ENCODE measurements at regions of chr2 and their contacts with region 1.

Region 1: GRCh38 chr2:97806738-97807618 is 93.6 kb downstream of the ZAP70 start:
- DNase-seq: peak; percentile 85
- ATAC-seq: peak; percentile 95 to 97

Region 2: GRCh38 chr2:98164281-98164680 is 357.3 kb after region 1 on chr2:
- intact Hi-C with region 1: no loop called
- DNase-seq: no peak
- ATAC-seq: no peak

Region 3: GRCh38 chr2:98175811-98176210 is 368.8 kb after region 1 on chr2:
- intact Hi-C with region 1: loop called in 1 of 2 experiments (anchors 10 kb)
- DNase-seq: no peak
- ATAC-seq: peak in 1 of 2 donors; percentile 40

Region 4: DNA sequence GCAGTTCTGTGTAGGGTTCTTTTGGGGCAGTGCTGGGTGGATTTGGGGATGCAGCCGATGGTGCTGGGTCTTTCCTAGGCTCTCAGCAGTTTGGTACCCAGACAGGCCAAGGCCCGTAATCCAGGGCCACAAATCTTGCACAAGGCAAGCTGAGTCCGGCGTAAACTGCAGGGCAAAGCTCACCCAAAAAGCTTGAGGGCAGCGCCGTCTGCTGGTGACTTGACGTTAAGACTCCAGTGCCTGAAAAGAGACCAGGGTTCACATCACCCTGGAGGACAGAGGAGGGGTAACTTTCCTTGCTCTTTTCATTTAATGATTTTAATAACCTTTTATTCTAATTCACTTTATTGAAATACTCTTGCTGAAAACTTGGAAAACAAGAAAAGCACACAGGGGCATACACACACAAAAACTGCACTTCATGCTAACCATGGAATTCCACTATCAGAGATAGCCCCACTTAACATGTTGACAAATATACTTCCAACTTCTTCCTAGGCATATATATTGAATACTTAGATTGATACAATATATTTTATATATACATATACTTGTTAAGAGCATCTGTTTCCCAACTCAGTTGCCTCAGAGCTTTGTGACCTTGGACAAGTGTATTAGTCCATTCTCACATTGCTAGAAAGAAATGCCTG is 578.2 kb after region 1 on chr2:
- intact Hi-C with region 1: loop called (anchors 2 to 10 kb)
- DNase-seq: peak; percentile 81
- ATAC-seq: peak; percentile 77 to 80